Heart right ventricle (tissue), 16 donors: ENCODE measurements at regions of chr9 and their contacts with region 1.

Region 1: DNA sequence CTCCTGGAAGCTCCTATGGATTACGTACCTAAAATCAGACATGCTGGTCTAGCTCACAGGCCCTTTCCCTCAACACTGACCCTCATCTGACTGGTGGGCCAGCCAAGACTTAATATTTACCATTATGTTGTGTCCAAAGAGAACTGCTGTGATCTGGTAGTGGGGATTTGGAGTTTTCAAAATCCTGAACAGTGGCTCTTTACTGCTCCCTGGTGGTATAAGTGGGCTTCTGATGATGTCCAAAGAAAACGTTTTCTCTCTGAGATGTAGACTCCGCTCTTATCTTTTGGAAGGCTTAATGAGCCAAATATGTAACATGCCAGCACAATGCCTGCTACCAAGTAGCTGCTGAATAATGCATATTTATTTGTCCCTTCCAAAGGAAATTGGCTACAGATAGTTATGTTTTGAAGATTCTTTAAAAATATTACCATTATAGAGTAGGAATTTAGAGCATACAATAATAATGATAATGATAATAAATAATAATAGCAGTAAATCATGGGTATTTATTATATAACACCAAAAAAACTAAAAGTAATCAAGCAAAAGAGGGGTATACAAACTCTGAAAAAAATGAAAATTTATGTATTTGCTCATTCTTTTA is 406.6 kb upstream of the TNC start:
- DNase-seq: peak in 1 of 2 donors; percentile 31
- ATAC-seq: peak in 6 of 8 donors; percentile 37 to 63 (median 48)
- H3K4me3 ChIP-seq: no peak overlapping the region
- H3K27ac ChIP-seq: no peak overlapping the region
- H3K4me1 ChIP-seq: peaks cover 0 to 4% (median 0%) of the 10 kb centered on the region in 9 donors
- H3K27me3 ChIP-seq: peaks cover 0 to 5% (median 0%) of the 10 kb centered on the region in 7 donors
- CTCF ChIP-seq: peak; percentile 20 to 74 (median 61)

Region 2: GRCh38 chr9:114405294-114406034 is 1119.1 kb before region 1 on chr9:
- intact Hi-C with region 1: loop called in 1 of 10 experiments (anchors 10 kb)
- DNase-seq: peak; percentile 52 to 84
- ATAC-seq: peak; percentile 87 to 95 (median 91)
- H3K4me3 ChIP-seq: no peak overlapping the region
- H3K27ac ChIP-seq: no peak overlapping the region
- H3K4me1 ChIP-seq: peaks cover 0 to 6% (median 0%) of the 10 kb centered on the region in 9 donors
- H3K27me3 ChIP-seq: peaks cover 0 to 3% (median 0%) of the 10 kb centered on the region in 7 donors
- CTCF ChIP-seq: peak; percentile 47 to 93 (median 85)

Region 3: DNA sequence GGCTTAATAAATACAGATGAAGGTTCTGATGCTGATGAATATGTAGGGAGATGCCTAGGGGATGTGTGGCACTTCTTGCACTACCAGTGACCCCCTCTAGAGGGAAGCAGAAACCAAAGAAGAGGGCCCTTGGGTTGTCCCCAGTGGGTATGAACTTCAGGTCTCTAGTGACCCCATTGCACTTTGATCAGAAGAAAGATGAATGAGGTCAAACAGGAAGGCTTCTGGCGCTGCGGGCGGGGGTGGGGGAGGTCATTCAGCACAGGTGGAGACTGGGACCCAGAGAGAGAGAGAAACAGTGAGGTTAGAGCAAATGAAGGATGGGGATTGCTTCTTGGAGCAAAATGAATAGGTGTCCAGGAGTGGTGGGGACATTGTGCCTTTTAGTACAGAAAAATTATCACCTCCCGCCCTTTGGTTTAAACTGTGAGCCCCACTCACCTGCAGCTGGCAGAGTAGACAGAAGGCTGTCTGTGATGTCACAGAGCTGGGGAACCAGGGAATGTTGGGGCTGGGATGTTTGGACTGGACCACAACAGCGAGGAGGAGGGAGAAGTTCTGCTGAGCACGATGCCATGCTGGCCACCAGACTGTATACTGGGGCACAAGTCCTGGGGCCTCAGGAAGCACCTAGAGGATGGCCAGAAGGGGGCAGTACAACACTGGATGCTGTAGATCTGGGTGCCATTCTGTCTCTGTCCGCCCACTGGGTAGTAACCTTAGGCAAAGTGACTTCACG is 842.8 kb before region 1 on chr9 and contains the start of gene TEX48:
- intact Hi-C with region 1: loop called in 2 of 10 experiments (anchors 10 kb)
- DNase-seq: peak in 1 of 2 donors; percentile 39
- ATAC-seq: peak in 5 of 8 donors; percentile 46 to 71 (median 53)
- H3K4me3 ChIP-seq: no peak within 1 kb of the TSS
- H3K27ac ChIP-seq: no peak within 1 kb of the TSS
- H3K4me1 ChIP-seq: peaks cover 0 to 7% (median 0%) of the 10 kb centered on the region in 9 donors
- H3K27me3 ChIP-seq: peaks cover 0 to 36% (median 15%) of the 10 kb centered on the region in 7 donors
- CTCF ChIP-seq: peak; percentile 23 to 65 (median 51)
- total RNA-seq, gene TEX48: not detected

Region 4: DNA sequence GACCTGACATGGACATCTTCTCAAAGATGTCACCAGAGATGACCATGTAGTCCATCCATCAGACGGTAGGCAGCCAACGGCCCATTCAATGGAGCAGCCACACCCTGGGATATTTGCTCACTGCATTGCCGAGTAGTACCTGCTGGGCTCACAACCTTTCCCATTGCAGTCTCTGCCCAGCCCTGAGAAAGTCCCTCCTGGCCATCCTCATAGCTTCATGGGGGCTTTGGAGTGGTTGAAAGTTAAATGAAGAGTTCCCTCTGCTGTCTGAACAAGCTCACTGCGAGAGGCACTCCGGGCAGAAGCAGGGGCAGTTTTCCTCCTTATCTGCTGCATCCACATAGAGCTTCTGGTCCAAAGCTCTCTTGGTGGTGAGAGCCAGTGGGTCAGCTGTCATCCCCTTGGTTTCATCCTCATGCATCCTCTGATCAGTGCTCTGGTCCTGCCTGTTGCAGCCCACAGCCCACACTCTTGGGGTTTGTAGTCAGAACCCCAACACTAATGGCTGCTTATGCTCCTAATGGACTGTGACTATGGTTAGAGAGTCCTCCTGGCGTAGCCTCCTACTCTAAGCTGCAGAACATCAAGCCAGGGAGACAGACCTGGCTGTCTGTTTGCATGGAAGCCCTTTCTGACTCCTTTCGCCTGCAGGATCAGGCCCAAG is 617.5 kb before region 1 on chr9:
- intact Hi-C with region 1: loop called in 1 of 10 experiments (anchors 5 kb)
- DNase-seq: no peak
- ATAC-seq: peak in 2 of 8 donors; percentile 17 to 37
- H3K4me3 ChIP-seq: no peak overlapping the region
- H3K27ac ChIP-seq: peak overlapping the region in 1 of 10 donors; percentile 29
- H3K4me1 ChIP-seq: peaks cover 0 to 23% (median 0%) of the 10 kb centered on the region in 9 donors
- H3K27me3 ChIP-seq: peaks cover 0 to 14% (median 5%) of the 10 kb centered on the region in 7 donors
- CTCF ChIP-seq: peak in 7 of 9 donors; percentile 18 to 65 (median 42)

Region 5: GRCh38 chr9:115022760-115023434 is 501.7 kb before region 1 on chr9:
- intact Hi-C with region 1: loop called in 4 of 10 experiments (anchors 10 kb)
- DNase-seq: no peak
- ATAC-seq: no peak
- H3K4me3 ChIP-seq: no peak overlapping the region
- H3K27ac ChIP-seq: no peak overlapping the region
- H3K4me1 ChIP-seq: no peaks in the 10 kb centered on the region
- H3K27me3 ChIP-seq: peaks cover 0 to 11% (median 4%) of the 10 kb centered on the region in 7 donors
- CTCF ChIP-seq: no peak

Region 6: DNA sequence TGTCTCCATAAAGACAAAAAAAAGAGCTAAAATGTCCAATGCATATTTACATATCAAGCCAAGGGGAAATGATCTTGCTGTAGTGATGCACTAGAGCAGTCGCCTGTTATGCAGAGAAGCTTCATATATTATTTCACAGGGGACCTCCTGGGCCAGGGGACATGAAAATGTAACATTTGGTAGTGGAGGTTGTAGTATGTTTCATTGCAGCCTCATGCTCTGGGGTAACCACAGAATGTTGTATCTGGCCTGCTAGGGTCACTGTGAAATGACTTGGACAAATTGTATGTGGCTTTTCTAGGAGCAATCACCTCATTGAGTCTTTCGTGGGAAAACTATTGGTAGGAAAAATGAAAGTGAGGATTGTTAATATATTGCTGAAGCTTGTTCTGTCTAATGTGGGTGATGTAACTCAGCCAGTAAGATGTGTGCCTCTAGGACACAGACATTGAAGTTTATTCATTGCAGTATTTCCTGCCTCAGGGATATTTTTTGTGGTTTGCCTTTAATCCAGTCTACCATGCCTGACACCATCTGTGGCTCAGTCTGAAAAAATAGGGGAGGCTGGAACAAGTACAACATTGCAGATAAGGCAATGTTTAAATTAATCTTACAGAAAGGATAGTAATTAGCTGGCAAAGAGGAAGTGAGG is 24.2 kb after region 1 on chr9:
- intact Hi-C with region 1: no loop called
- DNase-seq: no peak
- ATAC-seq: no peak
- H3K4me3 ChIP-seq: no peak overlapping the region
- H3K27ac ChIP-seq: no peak overlapping the region
- H3K4me1 ChIP-seq: no peaks in the 10 kb centered on the region
- H3K27me3 ChIP-seq: peaks cover 0 to 4% (median 0%) of the 10 kb centered on the region in 7 donors
- CTCF ChIP-seq: no peak

Region 7: GRCh38 chr9:115629879-115630840 is 105.6 kb after region 1 on chr9:
- intact Hi-C with region 1: no loop called
- DNase-seq: no peak
- ATAC-seq: no peak
- H3K4me3 ChIP-seq: no peak overlapping the region
- H3K27ac ChIP-seq: no peak overlapping the region
- H3K4me1 ChIP-seq: no peaks in the 10 kb centered on the region
- H3K27me3 ChIP-seq: no peaks in the 10 kb centered on the region
- CTCF ChIP-seq: no peak